Colonic mucosa (tissue), 4 donors: ENCODE measurements at regions of chr7 and their contacts with region 1.

Region 1: GRCh38 chr7:76020031-76020714 is 25.8 kb upstream of the TMEM120A start:
- DNase-seq: peak; percentile 79
- H3K4me3 ChIP-seq: no peak overlapping the region
- H3K27ac ChIP-seq: no peak overlapping the region
- H3K4me1 ChIP-seq: no peaks in the 10 kb centered on the region
- H3K27me3 ChIP-seq: no peaks in the 10 kb centered on the region
- CTCF ChIP-seq: peak; percentile 92

Region 2: GRCh38 chr7:75866489-75867389 is 153.4 kb before region 1 on chr7:
- intact Hi-C with region 1: loop called (anchors 1 kb)
- DNase-seq: peak; percentile 56
- H3K4me3 ChIP-seq: no peak overlapping the region
- H3K27ac ChIP-seq: no peak overlapping the region
- H3K4me1 ChIP-seq: no peaks in the 10 kb centered on the region
- H3K27me3 ChIP-seq: no peaks in the 10 kb centered on the region
- CTCF ChIP-seq: peak; percentile 94